ENCODE measurements at regions of chr16 and their contacts with region 1.

Region 1: DNA sequence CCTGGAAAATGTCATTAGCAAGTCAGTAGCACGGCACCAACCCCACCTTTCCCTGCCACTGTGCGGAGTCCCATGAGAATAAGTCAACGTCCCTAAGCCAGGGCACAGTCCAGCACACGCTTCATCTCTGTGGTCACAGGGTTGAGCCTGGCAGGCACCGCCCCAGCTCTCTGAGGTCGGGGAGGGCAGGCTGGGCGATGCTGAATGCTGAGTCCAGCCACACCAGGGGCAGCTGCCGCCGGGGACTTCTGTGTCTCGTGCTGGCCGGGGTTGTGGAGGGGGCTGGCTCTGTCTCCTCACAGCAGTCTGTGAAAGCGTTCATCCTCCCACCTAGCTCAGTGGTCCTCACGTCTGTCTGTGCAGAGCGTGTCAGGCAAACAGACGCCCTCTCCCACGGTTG is 53.2 kb downstream of the BANP start:
- DNase-seq: no peak
- H3K4me3 ChIP-seq: no peak overlapping the region
- H3K27ac ChIP-seq: no peak overlapping the region
- H3K4me1 ChIP-seq: no peaks in the 10 kb centered on the region
- H3K27me3 ChIP-seq: no peaks in the 10 kb centered on the region
- CTCF ChIP-seq: no peak

Region 2: GRCh38 chr16:87895641-87896141 is 108.7 kb before region 1 on chr16:
- CTCF ChIA-PET with region 1: no interaction called
- dilution Hi-C with region 1: no loop called
- in situ Hi-C with region 1: no loop called
- intact Hi-C with region 1: no loop called
- DNase-seq: peak; percentile 30
- H3K4me3 ChIP-seq: no peak overlapping the region
- H3K27ac ChIP-seq: no peak overlapping the region
- H3K4me1 ChIP-seq: peaks cover 8% of the 10 kb centered on the region
- H3K27me3 ChIP-seq: peaks cover 2% of the 10 kb centered on the region
- CTCF ChIP-seq: no peak

Region 3: DNA sequence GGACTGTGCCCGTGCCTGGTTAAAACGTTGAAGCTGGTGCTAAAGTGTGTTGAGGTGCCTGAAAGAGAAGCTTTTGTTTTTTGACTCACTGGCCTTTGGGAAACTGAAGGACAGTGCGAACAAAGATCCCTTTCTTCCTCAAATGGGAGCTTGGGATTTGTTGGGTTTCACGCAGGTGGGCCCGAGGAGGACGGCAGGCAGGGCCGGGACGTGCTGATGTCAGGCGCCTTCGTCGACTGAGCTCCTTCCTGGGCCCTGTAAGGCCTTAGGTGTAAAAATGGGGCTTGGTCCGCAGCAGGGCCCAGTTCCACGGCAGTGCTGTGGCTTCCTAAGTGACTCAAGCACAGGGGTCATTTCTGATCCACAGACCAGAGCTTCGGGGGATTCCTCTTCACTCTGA is 53.7 kb after region 1 on chr16:
- CTCF ChIA-PET with region 1: no interaction called
- dilution Hi-C with region 1: loop called (anchors 5 kb)
- in situ Hi-C with region 1: no loop called
- intact Hi-C with region 1: no loop called
- DNase-seq: no peak
- H3K4me3 ChIP-seq: no peak overlapping the region
- H3K27ac ChIP-seq: no peak overlapping the region
- H3K4me1 ChIP-seq: no peaks in the 10 kb centered on the region
- H3K27me3 ChIP-seq: no peaks in the 10 kb centered on the region
- CTCF ChIP-seq: no peak

Measured in mammary epithelial cell (primary cell).